PC-3 (cell line): ENCODE measurements at regions of chr1 and their contacts with region 1.

Region 1: GRCh38 chr1:234978397-234979295 is 150.0 kb downstream of the TOMM20 start:
- DNase-seq: peak; percentile 60
- ATAC-seq: peak; percentile 27
- H3K4me3 ChIP-seq: no peak overlapping the region
- H3K27ac ChIP-seq: peak overlapping the region; percentile 100
- H3K4me1 ChIP-seq: peaks cover 74% of the 10 kb centered on the region
- H3K27me3 ChIP-seq: no peaks in the 10 kb centered on the region
- CTCF ChIP-seq: no peak

Region 2: GRCh38 chr1:234925440-234926263 is 53.0 kb before region 1 on chr1:
- CTCF ChIA-PET with region 1: interaction called, 4 read pairs
- POLR2A ChIA-PET with region 1: interaction called, 4 read pairs
- intact Hi-C with region 1: loop called (anchors 5 kb)
- DNase-seq: peak; percentile 96
- ATAC-seq: peak; percentile 97
- H3K4me3 ChIP-seq: no peak overlapping the region
- H3K27ac ChIP-seq: peak overlapping the region; percentile 92
- H3K4me1 ChIP-seq: peaks cover 26% of the 10 kb centered on the region
- H3K27me3 ChIP-seq: no peaks in the 10 kb centered on the region
- CTCF ChIP-seq: no peak

Region 3: GRCh38 chr1:235468970-235469369 is 490.3 kb after region 1 on chr1:
- CTCF ChIA-PET with region 1: no interaction called
- POLR2A ChIA-PET with region 1: no interaction called
- intact Hi-C with region 1: no loop called
- DNase-seq: peak; percentile 79
- ATAC-seq: peak; percentile 98
- H3K4me3 ChIP-seq: 0 out of 2 replicates have a peak overlapping the region, but pooled peaks have one; percentile 21
- H3K27ac ChIP-seq: peak overlapping the region; percentile 21
- H3K4me1 ChIP-seq: peaks cover 9% of the 10 kb centered on the region
- H3K27me3 ChIP-seq: no peaks in the 10 kb centered on the region
- CTCF ChIP-seq: peak; percentile 17; the same call in 1 of the 2 replicates